Caco-2 (cell line): ENCODE measurements at regions of chr5 and their contacts with region 1.

Region 1: DNA sequence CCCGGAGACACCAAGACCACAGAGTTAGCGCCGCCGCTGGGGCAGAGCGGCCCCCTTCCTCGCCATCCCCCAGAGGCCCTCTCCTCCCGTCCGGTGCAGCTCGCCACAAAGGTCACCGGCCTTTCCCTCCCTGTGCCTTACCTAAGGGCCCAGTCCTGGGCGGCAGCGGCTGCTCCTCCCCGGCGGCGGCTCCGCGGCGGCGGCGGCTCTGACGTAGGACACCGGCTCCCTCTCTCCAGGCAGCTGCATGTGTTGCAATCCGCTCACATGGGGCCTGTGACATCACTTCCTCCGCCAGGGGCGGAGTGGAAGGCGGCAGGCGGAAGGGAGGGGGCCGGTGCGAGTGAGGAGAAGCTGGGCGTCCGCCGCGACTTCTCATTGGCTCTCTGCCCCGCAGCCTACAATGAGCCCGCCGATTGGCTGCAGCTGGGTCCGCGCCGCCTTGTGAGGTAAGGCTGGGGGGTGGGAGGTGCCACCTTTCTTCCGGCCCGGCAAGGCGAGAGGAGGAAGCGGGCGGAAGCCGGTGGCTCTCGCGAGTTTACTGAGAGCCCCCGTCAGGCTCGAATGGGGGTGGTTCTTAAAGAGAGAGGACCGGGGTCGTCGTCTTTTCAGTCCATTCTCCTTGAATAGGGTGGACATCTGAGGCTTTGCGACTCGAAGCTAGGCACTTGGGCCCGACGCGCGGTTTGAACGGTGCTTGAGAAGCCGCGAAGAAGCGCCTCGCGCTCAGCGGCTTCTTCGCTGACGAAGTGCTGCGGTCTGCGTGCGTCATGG is at the start of gene ETF1:
- DNase-seq: peak; percentile 100
- H3K4me3 ChIP-seq: peak within 1 kb of the TSS; percentile 100
- H3K4me3 Mint-ChIP-seq: peak within 1 kb of the TSS; percentile 82
- H3K27ac Mint-ChIP-seq: peak within 1 kb of the TSS; percentile 95
- H3K4me1 ChIP-seq: peaks cover 28% of the 10 kb centered on the region
- H3K4me1 Mint-ChIP-seq: peaks cover 20% of the 10 kb centered on the region
- H3K27me3 ChIP-seq: no peaks in the 10 kb centered on the region
- H3K27me3 Mint-ChIP-seq: no peaks in the 10 kb centered on the region
- CTCF ChIP-seq: no peak
- total RNA-seq, gene ETF1: 179 and 184 TPM in 2 replicates

Region 2: GRCh38 chr5:138449501-138450239 is 93.5 kb before region 1 on chr5:
- CTCF ChIA-PET with region 1: interaction called, 7 read pairs
- POLR2A ChIA-PET with region 1: no interaction called
- intact Hi-C with region 1: loop called (anchors 1 kb)
- DNase-seq: peak; percentile 84 to 92
- H3K4me3 ChIP-seq: no peak overlapping the region
- H3K4me3 Mint-ChIP-seq: no peak overlapping the region
- H3K27ac Mint-ChIP-seq: no peak overlapping the region
- H3K4me1 ChIP-seq: peaks cover 9% of the 10 kb centered on the region
- H3K4me1 Mint-ChIP-seq: no peaks in the 10 kb centered on the region
- H3K27me3 ChIP-seq: no peaks in the 10 kb centered on the region
- H3K27me3 Mint-ChIP-seq: no peaks in the 10 kb centered on the region
- CTCF ChIP-seq: peak; percentile 87 to 97

Region 3: GRCh38 chr5:138464008-138464387 is 79.1 kb before region 1 on chr5:
- CTCF ChIA-PET with region 1: interaction called, 5 read pairs
- POLR2A ChIA-PET with region 1: interaction called, 42 read pairs
- intact Hi-C with region 1: loop called (anchors 1 kb)
- DNase-seq: peak; percentile 92 to 95
- H3K4me3 ChIP-seq: peak overlapping the region; percentile 92
- H3K4me3 Mint-ChIP-seq: peak overlapping the region; percentile 73
- H3K27ac Mint-ChIP-seq: peak overlapping the region; percentile 96
- H3K4me1 ChIP-seq: no peaks in the 10 kb centered on the region; the same call in 1 of the 2 replicates
- H3K4me1 Mint-ChIP-seq: peaks cover 25% of the 10 kb centered on the region
- H3K27me3 ChIP-seq: no peaks in the 10 kb centered on the region
- H3K27me3 Mint-ChIP-seq: peaks cover 2% of the 10 kb centered on the region
- CTCF ChIP-seq: peak; percentile 65 to 97

Region 4: GRCh38 chr5:138491669-138492559 is 51.2 kb before region 1 on chr5:
- CTCF ChIA-PET with region 1: no interaction called
- POLR2A ChIA-PET with region 1: interaction called, 4 read pairs
- intact Hi-C with region 1: loop called (anchors 2 kb)
- DNase-seq: peak; percentile 83 to 88
- H3K4me3 ChIP-seq: peak overlapping the region; percentile 54
- H3K4me3 Mint-ChIP-seq: peak overlapping the region; percentile 87
- H3K27ac Mint-ChIP-seq: peak overlapping the region; percentile 86
- H3K4me1 ChIP-seq: peaks cover 44% of the 10 kb centered on the region
- H3K4me1 Mint-ChIP-seq: peaks cover 16% of the 10 kb centered on the region
- H3K27me3 ChIP-seq: no peaks in the 10 kb centered on the region
- H3K27me3 Mint-ChIP-seq: peaks cover 3% of the 10 kb centered on the region
- CTCF ChIP-seq: no peak

Region 5: DNA sequence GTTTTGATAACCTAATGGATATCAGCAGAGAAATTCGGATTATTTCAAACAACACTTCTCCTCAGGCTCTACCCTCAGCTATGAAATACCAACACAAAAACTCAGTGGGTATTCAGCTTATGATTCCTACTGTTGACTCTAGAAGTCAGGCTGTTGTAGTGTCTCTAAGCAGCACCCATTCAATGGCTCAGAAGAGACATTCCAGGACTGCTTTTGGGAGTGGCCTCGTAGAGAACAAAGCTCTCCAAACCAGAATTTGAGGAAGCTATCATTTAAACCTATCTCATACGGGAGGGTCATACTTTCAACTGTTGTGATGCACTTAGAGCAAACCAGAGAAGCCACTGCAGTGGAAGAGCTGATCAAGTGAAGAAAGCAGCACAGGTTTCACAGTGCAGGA is 34.2 kb before region 1 on chr5:
- CTCF ChIA-PET with region 1: interaction called, 5 read pairs
- POLR2A ChIA-PET with region 1: interaction called, 10 read pairs
- intact Hi-C with region 1: no loop called
- DNase-seq: no peak
- H3K4me3 ChIP-seq: no peak overlapping the region
- H3K4me3 Mint-ChIP-seq: no peak overlapping the region
- H3K27ac Mint-ChIP-seq: peak overlapping the region; percentile 67
- H3K4me1 ChIP-seq: peaks cover 8% of the 10 kb centered on the region; the same call in 1 of the 2 replicates
- H3K4me1 Mint-ChIP-seq: peaks cover 14% of the 10 kb centered on the region
- H3K27me3 ChIP-seq: no peaks in the 10 kb centered on the region
- H3K27me3 Mint-ChIP-seq: no peaks in the 10 kb centered on the region
- CTCF ChIP-seq: no peak

Region 6: DNA sequence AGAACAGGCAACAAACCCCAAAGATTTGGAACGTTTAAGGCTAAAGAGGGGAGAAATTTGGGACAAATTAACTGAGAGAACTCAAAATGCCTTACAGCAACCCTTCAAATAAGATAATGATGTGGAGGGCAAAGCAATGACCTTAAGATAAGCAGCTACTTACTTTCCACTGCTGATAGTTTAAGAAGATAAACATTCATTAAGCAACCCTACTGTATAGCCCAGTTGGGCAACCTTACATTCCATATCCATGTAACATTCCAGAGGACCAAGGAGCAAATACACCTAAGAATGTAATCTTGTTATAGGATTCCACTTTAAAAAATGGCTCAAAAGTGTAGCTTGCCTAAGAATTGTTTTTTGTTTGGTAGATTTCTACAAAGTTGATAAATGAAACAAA is 14.9 kb before region 1 on chr5:
- CTCF ChIA-PET with region 1: interaction called, 5 read pairs
- POLR2A ChIA-PET with region 1: interaction called, 36 read pairs
- intact Hi-C with region 1: loop called (anchors 1 kb)
- DNase-seq: peak in 1 of 2 experiments; percentile 74
- H3K4me3 ChIP-seq: no peak overlapping the region
- H3K4me3 Mint-ChIP-seq: peak overlapping the region; percentile 23
- H3K27ac Mint-ChIP-seq: peak overlapping the region; percentile 85
- H3K4me1 ChIP-seq: peaks cover 41% of the 10 kb centered on the region
- H3K4me1 Mint-ChIP-seq: peaks cover 32% of the 10 kb centered on the region
- H3K27me3 ChIP-seq: no peaks in the 10 kb centered on the region
- H3K27me3 Mint-ChIP-seq: no peaks in the 10 kb centered on the region
- CTCF ChIP-seq: no peak

Region 7: GRCh38 chr5:138575194-138576015 is 32.3 kb after region 1 on chr5 and contains the start of gene HSPA9:
- CTCF ChIA-PET with region 1: interaction called, 8 read pairs
- POLR2A ChIA-PET with region 1: interaction called, 18 read pairs
- intact Hi-C with region 1: no loop called
- DNase-seq: peak; percentile 98 to 99
- H3K4me3 ChIP-seq: peak within 1 kb of the TSS; percentile 93
- H3K4me3 Mint-ChIP-seq: peak within 1 kb of the TSS; percentile 99
- H3K27ac Mint-ChIP-seq: peak within 1 kb of the TSS; percentile 99
- H3K4me1 ChIP-seq: peaks cover 11% of the 10 kb centered on the region
- H3K4me1 Mint-ChIP-seq: peaks cover 6% of the 10 kb centered on the region
- H3K27me3 ChIP-seq: no peaks in the 10 kb centered on the region
- H3K27me3 Mint-ChIP-seq: no peaks in the 10 kb centered on the region
- CTCF ChIP-seq: peak in 1 of 2 experiments; percentile 12
- total RNA-seq, gene HSPA9: 533 and 537 TPM in 2 replicates

Region 8: DNA sequence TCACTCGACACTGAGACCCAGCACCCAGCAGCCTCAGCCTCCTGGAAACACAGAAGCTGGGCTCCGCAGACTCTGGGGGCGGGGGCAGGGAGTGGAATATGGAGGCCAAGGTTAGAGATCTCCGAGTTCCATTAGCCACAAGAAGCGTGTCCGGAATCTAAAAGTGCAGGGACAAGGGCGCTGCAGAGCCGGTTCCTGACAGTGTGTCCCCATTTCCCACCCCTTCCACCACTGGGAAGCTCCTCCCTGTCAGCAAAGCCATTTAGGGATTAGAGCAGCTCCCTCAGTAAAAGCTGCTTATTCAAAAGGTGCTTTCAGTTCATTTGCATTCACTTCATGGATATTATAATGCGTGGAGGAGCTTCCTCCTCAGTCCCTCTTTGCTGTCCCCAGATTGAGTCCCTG is 106.2 kb after region 1 on chr5:
- CTCF ChIA-PET with region 1: no interaction called
- POLR2A ChIA-PET with region 1: no interaction called
- intact Hi-C with region 1: no loop called
- DNase-seq: no peak
- H3K4me3 ChIP-seq: no peak overlapping the region
- H3K4me3 Mint-ChIP-seq: no peak overlapping the region
- H3K27ac Mint-ChIP-seq: no peak overlapping the region
- H3K4me1 ChIP-seq: peaks cover 20% of the 10 kb centered on the region
- H3K4me1 Mint-ChIP-seq: no peaks in the 10 kb centered on the region
- H3K27me3 ChIP-seq: no peaks in the 10 kb centered on the region
- H3K27me3 Mint-ChIP-seq: no peaks in the 10 kb centered on the region
- CTCF ChIP-seq: no peak

Region 9: GRCh38 chr5:138789771-138790242 is 246.7 kb after region 1 on chr5:
- CTCF ChIA-PET with region 1: no interaction called
- POLR2A ChIA-PET with region 1: no interaction called
- intact Hi-C with region 1: no loop called
- DNase-seq: peak in 1 of 2 experiments; percentile 45
- H3K4me3 ChIP-seq: no peak overlapping the region
- H3K4me3 Mint-ChIP-seq: no peak overlapping the region
- H3K27ac Mint-ChIP-seq: peak overlapping the region; percentile 4
- H3K4me1 ChIP-seq: peaks cover 21% of the 10 kb centered on the region
- H3K4me1 Mint-ChIP-seq: peaks cover 42% of the 10 kb centered on the region
- H3K27me3 ChIP-seq: no peaks in the 10 kb centered on the region
- H3K27me3 Mint-ChIP-seq: no peaks in the 10 kb centered on the region
- CTCF ChIP-seq: peak; percentile 60 to 69